Naive thymus-derived CD4-positive, alpha-beta T cell (primary cell): ENCODE measurements at regions of chr12 and their contacts with region 1.

Region 1: GRCh38 chr12:118357257-118358007 is 15.3 kb downstream of the TAOK3 start:
- DNase-seq: peak in 8 of 9 donors; percentile 9 to 67 (median 62)
- ATAC-seq: peak; percentile 81
- H3K4me3 ChIP-seq: peak overlapping the region; percentile 58
- H3K4me3 Mint-ChIP-seq: peak overlapping the region; percentile 73 to 98 (median 86)
- H3K27ac ChIP-seq: peak overlapping the region; percentile 66
- H3K27ac Mint-ChIP-seq: peak overlapping the region; percentile 33 to 96 (median 79)
- H3K4me1 ChIP-seq: peaks cover 21 to 29% of the 10 kb centered on the region in 2 donors
- H3K4me1 Mint-ChIP-seq: peaks cover 34 to 69% (median 59%) of the 10 kb centered on the region in 7 donors
- H3K27me3 ChIP-seq: no peaks in the 10 kb centered on the region
- H3K27me3 Mint-ChIP-seq: no peaks in the 10 kb centered on the region

Region 2: GRCh38 chr12:118061011-118061875 is 296.2 kb before region 1 on chr12 and contains the start of gene WSB2:
- CTCF ChIA-PET with region 1: no interaction called
- POLR2A ChIA-PET with region 1: no interaction called
- intact Hi-C with region 1: loop called in 1 of 2 experiments (anchors 5 kb)
- DNase-seq: peak; percentile 24 to 81 (median 39)
- ATAC-seq: peak; percentile 53
- H3K4me3 ChIP-seq: peak within 1 kb of the TSS; percentile 88
- H3K4me3 Mint-ChIP-seq: peak within 1 kb of the TSS; percentile 88 to 100 (median 96)
- H3K27ac ChIP-seq: peak within 1 kb of the TSS; percentile 80
- H3K27ac Mint-ChIP-seq: peak within 1 kb of the TSS; percentile 92 to 98 (median 94)
- H3K4me1 ChIP-seq: peaks cover 13 to 32% of the 10 kb centered on the region in 2 donors
- H3K4me1 Mint-ChIP-seq: peaks cover 44 to 65% (median 57%) of the 10 kb centered on the region in 7 donors
- H3K27me3 ChIP-seq: no peaks in the 10 kb centered on the region
- H3K27me3 Mint-ChIP-seq: no peaks in the 10 kb centered on the region
- total RNA-seq, gene WSB2: 12.2 to 52.2 (median 19.1) TPM

Region 3: DNA sequence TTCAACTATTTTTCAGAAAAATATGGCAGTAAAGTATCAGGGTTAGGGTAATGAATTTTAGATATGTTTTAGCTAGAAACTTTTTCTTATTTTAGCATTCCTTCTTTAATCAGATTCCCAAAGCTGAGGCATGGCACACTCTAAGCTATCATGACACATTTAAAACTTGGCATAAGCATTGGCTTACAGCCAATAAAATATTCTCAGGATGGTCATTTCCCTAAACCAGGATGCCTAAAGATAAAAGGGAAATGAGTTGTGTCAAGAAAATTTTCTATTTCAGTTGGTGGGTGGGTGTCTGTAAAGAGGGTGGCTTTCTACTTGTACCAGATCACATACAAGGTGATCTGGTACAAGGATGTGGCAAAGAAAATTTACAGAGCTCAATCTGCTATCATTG is 173.7 kb before region 1 on chr12:
- CTCF ChIA-PET with region 1: no interaction called
- POLR2A ChIA-PET with region 1: interaction called, 3 read pairs
- intact Hi-C with region 1: loop called (anchors 5 kb)
- DNase-seq: no peak
- ATAC-seq: no peak
- H3K4me3 ChIP-seq: no peak overlapping the region
- H3K4me3 Mint-ChIP-seq: no peak overlapping the region
- H3K27ac ChIP-seq: no peak overlapping the region
- H3K27ac Mint-ChIP-seq: peak overlapping the region in 1 of 9 donors; percentile 58
- H3K4me1 ChIP-seq: no peaks in the 10 kb centered on the region
- H3K4me1 Mint-ChIP-seq: peaks cover 7 to 33% (median 16%) of the 10 kb centered on the region in 7 donors
- H3K27me3 ChIP-seq: no peaks in the 10 kb centered on the region
- H3K27me3 Mint-ChIP-seq: no peaks in the 10 kb centered on the region

Region 4: GRCh38 chr12:118307069-118307954 is 50.1 kb before region 1 on chr12:
- CTCF ChIA-PET with region 1: no interaction called
- POLR2A ChIA-PET with region 1: interaction called, 3 read pairs
- intact Hi-C with region 1: loop called (anchors 1 to 5 kb)
- DNase-seq: peak in 1 of 9 donors; percentile 38
- ATAC-seq: peak; percentile 56
- H3K4me3 ChIP-seq: no peak overlapping the region
- H3K4me3 Mint-ChIP-seq: peak overlapping the region in 7 of 10 donors; percentile 0 to 46 (median 25)
- H3K27ac ChIP-seq: no peak overlapping the region
- H3K27ac Mint-ChIP-seq: peak overlapping the region in 4 of 9 donors; percentile 19 to 68 (median 51)
- H3K4me1 ChIP-seq: peaks cover 6 to 17% of the 10 kb centered on the region in 2 donors
- H3K4me1 Mint-ChIP-seq: peaks cover 23 to 61% (median 51%) of the 10 kb centered on the region in 7 donors
- H3K27me3 ChIP-seq: no peaks in the 10 kb centered on the region
- H3K27me3 Mint-ChIP-seq: no peaks in the 10 kb centered on the region

Region 5: DNA sequence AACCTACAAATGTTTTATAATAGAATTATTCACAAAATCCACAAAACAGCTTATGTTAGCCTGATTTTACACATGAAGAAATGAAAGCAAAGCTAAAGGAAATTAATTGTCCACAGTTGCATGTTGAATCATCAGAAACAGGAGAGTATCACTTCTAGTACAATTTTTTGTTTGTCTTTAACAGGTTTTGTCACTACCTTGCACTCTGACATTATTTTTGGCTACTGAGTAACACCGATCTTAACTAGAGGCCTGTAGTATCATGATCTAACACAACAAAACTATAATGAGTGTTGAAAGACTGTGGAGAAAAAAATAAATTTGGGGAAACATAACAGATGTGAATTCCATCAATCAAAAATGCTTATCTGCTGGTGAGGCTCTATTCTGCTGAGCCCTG is 44.9 kb before region 1 on chr12:
- CTCF ChIA-PET with region 1: no interaction called
- POLR2A ChIA-PET with region 1: interaction called, 3 read pairs
- intact Hi-C with region 1: loop called (anchors 1 to 5 kb)
- DNase-seq: no peak
- ATAC-seq: no peak
- H3K4me3 ChIP-seq: no peak overlapping the region
- H3K4me3 Mint-ChIP-seq: peak overlapping the region in 1 of 10 donors; percentile 5
- H3K27ac ChIP-seq: no peak overlapping the region
- H3K27ac Mint-ChIP-seq: peak overlapping the region in 4 of 9 donors; percentile 0 to 78 (median 42)
- H3K4me1 ChIP-seq: peaks cover 0 to 5% of the 10 kb centered on the region in 2 donors
- H3K4me1 Mint-ChIP-seq: peaks cover 27 to 61% (median 53%) of the 10 kb centered on the region in 7 donors
- H3K27me3 ChIP-seq: no peaks in the 10 kb centered on the region
- H3K27me3 Mint-ChIP-seq: no peaks in the 10 kb centered on the region

Region 6: GRCh38 chr12:118345355-118345754 is 12.1 kb before region 1 on chr12:
- CTCF ChIA-PET with region 1: interaction called, 3 read pairs
- POLR2A ChIA-PET with region 1: interaction called, 6 read pairs
- intact Hi-C with region 1: loop called in 1 of 2 experiments (anchors 2 kb)
- DNase-seq: no peak
- ATAC-seq: no peak
- H3K4me3 ChIP-seq: no peak overlapping the region
- H3K4me3 Mint-ChIP-seq: peak overlapping the region in 4 of 10 donors; percentile 13 to 45 (median 20)
- H3K27ac ChIP-seq: no peak overlapping the region
- H3K27ac Mint-ChIP-seq: peak overlapping the region in 2 of 9 donors; percentile 70 to 76
- H3K4me1 ChIP-seq: no peaks in the 10 kb centered on the region
- H3K4me1 Mint-ChIP-seq: peaks cover 14 to 65% (median 54%) of the 10 kb centered on the region in 7 donors
- H3K27me3 ChIP-seq: no peaks in the 10 kb centered on the region
- H3K27me3 Mint-ChIP-seq: no peaks in the 10 kb centered on the region

Region 7: DNA sequence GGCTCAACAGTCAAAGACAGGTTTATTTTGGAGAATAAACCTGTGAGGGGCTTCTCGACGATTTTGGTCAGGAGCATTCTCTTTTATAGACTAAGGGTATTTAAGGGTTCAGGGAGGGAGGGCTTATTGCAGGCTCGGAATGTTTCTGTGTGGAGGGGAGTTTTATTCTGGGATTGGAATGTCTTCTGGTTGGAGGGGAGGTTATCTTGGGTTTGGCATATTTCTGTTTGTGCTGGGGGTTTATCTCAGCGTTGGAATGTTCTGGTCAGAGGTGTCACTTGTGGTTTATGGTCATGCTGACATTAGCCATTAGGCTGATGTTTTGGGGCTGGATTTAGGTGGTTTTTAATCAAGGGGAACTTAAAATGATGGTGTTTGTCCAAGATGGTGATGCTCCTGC is 122.8 kb after region 1 on chr12:
- CTCF ChIA-PET with region 1: no interaction called
- POLR2A ChIA-PET with region 1: no interaction called
- intact Hi-C with region 1: no loop called
- DNase-seq: no peak
- ATAC-seq: no peak
- H3K4me3 ChIP-seq: no peak overlapping the region
- H3K4me3 Mint-ChIP-seq: no peak overlapping the region
- H3K27ac ChIP-seq: no peak overlapping the region
- H3K27ac Mint-ChIP-seq: no peak overlapping the region
- H3K4me1 ChIP-seq: no peaks in the 10 kb centered on the region
- H3K4me1 Mint-ChIP-seq: no peaks in the 10 kb centered on the region
- H3K27me3 ChIP-seq: no peaks in the 10 kb centered on the region
- H3K27me3 Mint-ChIP-seq: peaks cover 0 to 8% (median 3%) of the 10 kb centered on the region in 5 donors

Region 8: GRCh38 chr12:118603610-118604361 is 246.4 kb after region 1 on chr12:
- CTCF ChIA-PET with region 1: no interaction called
- POLR2A ChIA-PET with region 1: no interaction called
- intact Hi-C with region 1: no loop called
- DNase-seq: no peak
- ATAC-seq: no peak
- H3K4me3 ChIP-seq: no peak overlapping the region
- H3K4me3 Mint-ChIP-seq: no peak overlapping the region
- H3K27ac ChIP-seq: no peak overlapping the region
- H3K27ac Mint-ChIP-seq: no peak overlapping the region
- H3K4me1 ChIP-seq: no peaks in the 10 kb centered on the region
- H3K4me1 Mint-ChIP-seq: no peaks in the 10 kb centered on the region
- H3K27me3 ChIP-seq: no peaks in the 10 kb centered on the region
- H3K27me3 Mint-ChIP-seq: peaks cover 0 to 11% (median 4%) of the 10 kb centered on the region in 5 donors